IMR-90 (cell line): ENCODE measurements at regions of chr2 and their contacts with region 1.

Region 1: GRCh38 chr2:181104512-181105115 is 124.2 kb downstream of the UBE2E3 start:
- DNase-seq: peak; percentile 76
- ATAC-seq: peak; percentile 50
- H3K4me3 ChIP-seq: no peak overlapping the region
- H3K27ac ChIP-seq: no peak overlapping the region
- H3K4me1 ChIP-seq: peaks cover 5% of the 10 kb centered on the region
- H3K27me3 ChIP-seq: no peaks in the 10 kb centered on the region
- CTCF ChIP-seq: peak; percentile 90
- POLR2A ChIP-seq: no peak
- RAD21 ChIP-seq: peak; percentile 86

Region 2: GRCh38 chr2:181457121-181457740 is 352.6 kb after region 1 on chr2 and contains the start of gene ITGA4:
- CTCF ChIA-PET with region 1: interaction called, 12 read pairs
- POLR2A ChIA-PET with region 1: no interaction called
- dilution Hi-C with region 1: no loop called
- in situ Hi-C with region 1: no loop called
- intact Hi-C with region 1: loop called (anchors 1 kb)
- DNase-seq: peak; percentile 65
- ATAC-seq: peak; percentile 97
- H3K4me3 ChIP-seq: peak within 1 kb of the TSS; percentile 75
- H3K27ac ChIP-seq: peak within 1 kb of the TSS; percentile 60; the same call in 1 of the 2 replicates
- H3K4me1 ChIP-seq: 0 out of 2 replicates have a peak, but pooled peaks cover 2% of the 10 kb centered on the region
- H3K27me3 ChIP-seq: no peaks in the 10 kb centered on the region; the same call in 1 of the 2 replicates
- CTCF ChIP-seq: peak; percentile 77
- POLR2A ChIP-seq: no peak
- RAD21 ChIP-seq: peak; percentile 67
- total RNA-seq, gene ITGA4: 13.6 and 20.6 TPM in 2 replicates

Region 3: GRCh38 chr2:181466661-181467576 is 362.3 kb after region 1 on chr2:
- CTCF ChIA-PET with region 1: interaction called, 14 read pairs
- POLR2A ChIA-PET with region 1: no interaction called
- dilution Hi-C with region 1: no loop called
- in situ Hi-C with region 1: no loop called
- intact Hi-C with region 1: loop called (anchors 1 kb)
- DNase-seq: peak; percentile 63
- ATAC-seq: peak; percentile 63; the same call in 1 of the 2 replicates
- H3K4me3 ChIP-seq: no peak overlapping the region
- H3K27ac ChIP-seq: no peak overlapping the region
- H3K4me1 ChIP-seq: no peaks in the 10 kb centered on the region
- H3K27me3 ChIP-seq: no peaks in the 10 kb centered on the region
- CTCF ChIP-seq: peak; percentile 75
- POLR2A ChIP-seq: no peak
- RAD21 ChIP-seq: peak; percentile 63

Region 4: DNA sequence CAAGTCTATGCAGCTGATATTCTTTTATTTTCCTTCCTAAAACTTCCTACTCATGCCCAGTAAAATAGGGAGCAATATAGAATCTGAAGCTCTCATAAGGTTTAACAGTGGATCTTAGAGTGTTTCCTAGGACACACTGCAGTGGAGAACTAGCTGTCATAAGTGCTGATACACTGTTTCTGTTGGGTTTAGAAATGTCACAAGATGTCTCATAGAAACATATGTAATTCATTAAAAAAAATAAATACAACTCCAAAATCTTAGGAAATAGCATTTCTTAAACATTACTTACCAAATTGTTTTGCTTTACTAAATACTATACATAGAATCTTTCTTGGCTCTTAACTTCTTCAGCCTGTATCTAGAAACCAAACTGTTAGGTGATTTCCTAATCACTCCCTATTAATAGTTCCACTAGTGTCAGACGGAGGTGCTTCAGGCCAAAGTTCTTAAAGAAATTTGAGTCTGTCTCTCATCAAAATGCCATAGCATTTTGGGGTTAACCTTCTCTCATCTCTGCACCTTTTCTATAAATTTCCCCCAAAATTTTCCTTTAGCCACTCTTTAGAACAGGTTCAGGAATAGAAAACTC is 458.6 kb after region 1 on chr2:
- CTCF ChIA-PET with region 1: no interaction called
- POLR2A ChIA-PET with region 1: no interaction called
- dilution Hi-C with region 1: no loop called
- in situ Hi-C with region 1: no loop called
- intact Hi-C with region 1: no loop called
- DNase-seq: no peak
- ATAC-seq: peak; percentile 51
- H3K4me3 ChIP-seq: no peak overlapping the region
- H3K27ac ChIP-seq: no peak overlapping the region
- H3K4me1 ChIP-seq: no peaks in the 10 kb centered on the region
- H3K27me3 ChIP-seq: no peaks in the 10 kb centered on the region
- CTCF ChIP-seq: no peak
- POLR2A ChIP-seq: no peak
- RAD21 ChIP-seq: no peak

Region 5: DNA sequence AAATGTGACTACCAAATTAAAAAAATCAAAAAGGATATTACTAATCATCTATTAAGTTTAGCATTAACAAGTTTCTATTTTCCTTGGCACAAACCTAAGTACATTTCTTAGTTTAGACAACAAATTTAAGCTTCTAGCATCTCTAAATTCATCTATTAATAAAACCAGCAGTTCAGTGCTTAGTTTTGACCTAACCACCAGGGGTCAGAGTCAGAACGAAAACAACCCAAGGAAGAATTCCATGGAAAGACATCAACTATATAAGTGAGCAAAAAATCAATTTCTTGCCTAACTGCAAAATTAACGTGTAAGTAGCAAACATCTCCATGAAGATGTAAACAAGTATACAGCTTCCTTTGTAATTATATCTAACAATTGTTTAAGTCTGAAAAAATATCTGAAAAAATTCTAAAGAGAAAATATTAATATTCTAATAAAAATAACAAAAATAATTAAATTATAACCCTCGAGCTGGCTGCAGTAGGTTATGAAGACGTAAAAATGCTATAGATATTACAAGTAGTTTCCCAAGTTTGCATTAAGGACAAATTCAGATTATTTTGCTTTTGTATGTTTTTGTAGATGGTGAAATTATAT is 468.6 kb after region 1 on chr2:
- CTCF ChIA-PET with region 1: interaction called, 5 read pairs
- POLR2A ChIA-PET with region 1: no interaction called
- dilution Hi-C with region 1: no loop called
- in situ Hi-C with region 1: no loop called
- intact Hi-C with region 1: loop called (anchors 1 kb)
- DNase-seq: peak; percentile 50
- ATAC-seq: peak; percentile 54; the same call in 1 of the 2 replicates
- H3K4me3 ChIP-seq: no peak overlapping the region
- H3K27ac ChIP-seq: no peak overlapping the region
- H3K4me1 ChIP-seq: no peaks in the 10 kb centered on the region
- H3K27me3 ChIP-seq: peaks cover 9% of the 10 kb centered on the region
- CTCF ChIP-seq: peak; percentile 55
- POLR2A ChIP-seq: no peak
- RAD21 ChIP-seq: peak; percentile 47

Region 6: DNA sequence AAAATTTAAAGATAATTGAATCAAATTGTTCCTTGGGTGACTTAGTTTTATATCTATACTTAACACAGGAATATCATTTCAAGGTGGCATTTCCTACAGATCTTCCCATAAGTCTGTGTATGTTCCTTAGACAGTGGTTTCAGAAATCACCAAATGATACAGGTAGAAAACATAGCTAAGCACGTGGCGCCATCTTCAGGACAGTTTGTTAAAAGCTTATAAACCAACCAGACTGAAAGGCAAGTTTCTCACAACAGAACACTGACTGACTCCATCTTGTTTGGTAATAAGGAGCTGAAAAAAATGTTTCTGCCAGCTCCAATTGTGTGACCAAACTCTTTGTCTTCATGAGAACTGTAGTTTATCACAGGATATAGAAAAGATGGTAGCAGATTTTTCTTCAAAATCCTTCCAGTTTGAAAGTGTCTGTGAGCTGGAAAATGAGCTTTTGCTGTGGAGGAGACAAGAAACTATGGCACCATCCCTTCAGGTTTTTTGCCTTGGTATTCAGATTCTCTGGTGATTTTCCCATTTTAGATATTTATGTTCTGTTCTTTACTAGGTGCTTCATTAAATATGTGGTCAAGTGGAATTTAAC is 610.5 kb after region 1 on chr2:
- CTCF ChIA-PET with region 1: interaction called, 5 read pairs
- POLR2A ChIA-PET with region 1: no interaction called
- dilution Hi-C with region 1: no loop called
- in situ Hi-C with region 1: loop called (anchors 10 kb)
- intact Hi-C with region 1: loop called (anchors 1 kb)
- DNase-seq: peak; percentile 82
- ATAC-seq: peak; percentile 92
- H3K4me3 ChIP-seq: no peak overlapping the region
- H3K27ac ChIP-seq: no peak overlapping the region
- H3K4me1 ChIP-seq: no peaks in the 10 kb centered on the region
- H3K27me3 ChIP-seq: no peaks in the 10 kb centered on the region; the same call in none of the 2 replicates
- CTCF ChIP-seq: peak; percentile 79
- POLR2A ChIP-seq: no peak
- RAD21 ChIP-seq: peak; percentile 90

Region 7: DNA sequence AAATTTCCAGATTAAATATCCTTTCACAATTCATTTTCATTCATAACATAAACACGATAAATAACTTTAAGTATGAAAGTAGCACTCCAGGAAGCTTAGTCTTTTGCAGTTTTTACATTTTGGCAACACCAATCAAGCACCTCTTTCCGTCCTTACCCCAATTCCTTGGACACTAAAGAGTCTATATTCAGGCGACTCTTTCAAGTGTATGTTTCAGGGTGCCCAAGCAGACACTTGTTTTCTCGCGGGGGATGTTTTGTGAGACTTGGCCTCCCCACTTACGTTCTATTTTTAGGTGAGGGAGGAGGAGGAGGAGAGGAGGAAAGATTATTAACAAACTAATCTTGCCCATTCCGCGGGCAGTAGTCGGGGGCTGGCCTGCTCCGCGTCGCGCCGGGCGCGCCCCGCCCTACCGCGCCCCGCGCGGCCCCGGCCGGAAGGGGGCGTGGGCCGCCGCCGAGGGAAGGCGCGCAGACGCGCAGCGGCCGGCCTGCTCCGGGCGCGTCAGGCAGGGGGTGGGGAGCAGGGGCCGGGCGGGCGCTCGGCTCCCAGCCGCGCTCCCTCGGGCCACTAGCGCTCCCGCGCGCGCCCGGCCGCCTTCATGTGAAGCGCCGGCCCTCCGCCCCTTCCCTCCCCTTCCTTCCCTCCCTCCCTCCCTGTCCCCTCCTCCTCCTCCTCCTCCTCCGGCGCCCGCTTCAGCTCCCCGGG is 786.8 kb after region 1 on chr2 and contains the start of gene ITPRID2:
- CTCF ChIA-PET with region 1: no interaction called
- POLR2A ChIA-PET with region 1: no interaction called
- dilution Hi-C with region 1: no loop called
- in situ Hi-C with region 1: no loop called
- intact Hi-C with region 1: loop called (anchors 10 kb)
- DNase-seq: peak; percentile 89
- ATAC-seq: peak; percentile 97
- H3K4me3 ChIP-seq: peak within 1 kb of the TSS; percentile 98
- H3K27ac ChIP-seq: peak within 1 kb of the TSS; percentile 98
- H3K4me1 ChIP-seq: peaks cover 3% of the 10 kb centered on the region; the same call in 1 of the 2 replicates
- H3K27me3 ChIP-seq: no peaks in the 10 kb centered on the region
- CTCF ChIP-seq: peak; percentile 44; the same call in 1 of the 2 replicates
- POLR2A ChIP-seq: no peak
- RAD21 ChIP-seq: no peak
- total RNA-seq, gene ITPRID2: 168 and 187 TPM in 2 replicates

Region 8: GRCh38 chr2:182101263-182101662 is 996.6 kb after region 1 on chr2:
- CTCF ChIA-PET with region 1: no interaction called
- POLR2A ChIA-PET with region 1: no interaction called
- dilution Hi-C with region 1: no loop called
- in situ Hi-C with region 1: loop called (anchors 25 kb)
- intact Hi-C with region 1: no loop called
- DNase-seq: no peak
- ATAC-seq: no peak
- H3K4me3 ChIP-seq: no peak overlapping the region
- H3K27ac ChIP-seq: no peak overlapping the region
- H3K4me1 ChIP-seq: no peaks in the 10 kb centered on the region
- H3K27me3 ChIP-seq: no peaks in the 10 kb centered on the region
- CTCF ChIP-seq: no peak
- POLR2A ChIP-seq: no peak
- RAD21 ChIP-seq: no peak